ENCODE measurements at regions of chr5 and their contacts with region 1.

Region 1: DNA sequence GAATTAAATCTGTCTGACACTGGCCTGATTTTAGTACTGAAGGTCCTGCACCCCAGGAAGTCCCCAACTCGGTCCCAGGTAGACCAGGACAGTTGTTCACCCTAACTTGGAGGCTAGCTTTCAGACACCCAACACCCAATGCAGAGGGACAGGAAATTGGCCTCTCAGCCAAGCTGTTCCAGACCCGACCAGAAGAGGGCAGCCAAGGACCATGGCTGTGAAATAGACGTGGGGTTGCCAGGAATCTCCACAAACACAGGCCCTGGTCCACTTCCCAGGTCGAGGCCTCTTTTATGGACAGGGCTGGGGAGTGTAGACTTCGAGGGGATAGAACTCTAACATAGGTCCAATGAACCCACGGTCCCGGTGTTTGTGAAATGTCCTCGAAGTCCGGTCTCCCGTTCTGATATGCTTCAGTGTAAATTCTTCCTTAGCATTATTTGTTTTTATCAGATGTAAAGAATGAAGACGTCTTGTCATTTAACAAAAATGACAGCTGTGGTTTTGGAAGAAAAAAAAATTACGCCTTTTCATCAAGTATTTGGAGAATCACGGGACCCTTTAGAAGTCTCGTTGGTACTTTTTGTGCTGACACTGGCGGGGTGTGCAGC is 260.3 kb upstream of the ADAMTS16 start:
- DNase-seq: peak; percentile 68
- H3K4me3 ChIP-seq: no peak overlapping the region
- H3K27ac ChIP-seq: no peak overlapping the region
- H3K4me1 ChIP-seq: no peaks in the 10 kb centered on the region
- H3K27me3 ChIP-seq: peaks cover 11% of the 10 kb centered on the region
- CTCF ChIP-seq: peak; percentile 89

Region 2: DNA sequence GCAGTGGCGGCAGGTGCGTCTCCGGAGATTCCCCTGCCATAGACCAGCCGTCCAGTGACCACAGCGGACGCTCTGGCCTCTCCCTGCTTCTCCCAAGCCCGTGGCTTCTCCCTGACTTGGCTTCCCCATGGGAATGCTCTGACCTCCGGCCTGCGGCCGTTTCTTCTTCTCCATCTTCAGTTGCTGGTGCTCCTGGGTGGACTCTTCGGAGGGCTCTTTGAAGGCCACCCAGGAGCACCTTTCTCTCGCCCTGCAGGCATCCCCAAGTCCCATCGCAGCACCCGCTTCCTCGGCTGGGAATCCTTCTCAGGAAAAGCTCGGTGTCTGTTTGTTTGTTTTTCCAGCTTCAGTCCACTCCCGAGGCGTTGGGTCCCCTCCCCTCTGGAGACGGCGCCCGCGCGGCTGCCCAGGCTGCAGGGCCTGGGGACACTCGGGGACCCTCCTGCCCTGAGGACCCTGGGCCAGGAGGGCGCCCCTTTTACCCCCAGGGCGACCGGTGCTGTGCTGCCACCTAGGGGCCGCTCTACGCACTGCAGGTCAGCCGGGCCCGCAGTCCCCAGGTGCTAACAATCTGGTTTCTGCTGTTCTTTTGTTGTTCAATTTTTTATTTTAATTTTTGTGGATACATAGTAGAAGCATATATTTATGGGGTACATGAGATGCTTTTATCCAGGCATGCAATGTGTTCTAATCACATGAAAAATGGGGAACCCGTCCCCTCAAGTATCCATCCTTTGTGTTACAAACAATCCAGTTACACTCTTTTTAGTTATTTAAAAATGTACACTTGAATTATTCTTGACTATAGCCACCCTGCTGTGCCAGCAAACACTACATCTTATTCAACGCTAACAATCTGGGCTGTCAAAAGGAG is 62.4 kb after region 1 on chr5:
- CTCF ChIA-PET with region 1: no interaction called
- POLR2A ChIA-PET with region 1: no interaction called
- intact Hi-C with region 1: loop called (anchors 1 kb)
- DNase-seq: peak; percentile 5
- H3K4me3 ChIP-seq: no peak overlapping the region
- H3K27ac ChIP-seq: no peak overlapping the region
- H3K4me1 ChIP-seq: no peaks in the 10 kb centered on the region
- H3K27me3 ChIP-seq: peaks cover 3% of the 10 kb centered on the region
- CTCF ChIP-seq: peak; percentile 97

Measured in A673 (cell line).